Sciatic nerve (tissue), 2 donors: ENCODE measurements at regions of chr2 and their contacts with region 1.

Region 1: DNA sequence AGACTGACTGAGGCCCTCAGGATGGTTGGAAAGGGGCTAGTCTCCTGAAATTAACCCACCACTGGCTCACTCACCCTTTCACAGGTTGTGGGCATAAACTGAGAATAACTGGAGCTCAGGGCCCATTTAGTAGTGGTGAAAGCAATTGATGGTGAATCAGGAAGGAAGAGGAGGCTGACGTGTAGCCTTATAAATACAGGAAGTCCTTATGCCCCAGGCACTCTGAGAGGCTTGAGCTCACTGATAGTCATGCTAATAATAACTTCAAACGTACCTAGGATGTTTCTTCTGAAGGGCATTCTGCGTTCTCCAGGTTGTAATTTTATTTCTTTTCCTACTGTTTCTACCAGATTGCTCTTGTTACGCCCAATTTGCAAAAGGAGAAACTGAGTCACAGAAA is 328.4 kb downstream of the CLIP4 start:
- DNase-seq: no peak
- ATAC-seq: no peak

Region 2: DNA sequence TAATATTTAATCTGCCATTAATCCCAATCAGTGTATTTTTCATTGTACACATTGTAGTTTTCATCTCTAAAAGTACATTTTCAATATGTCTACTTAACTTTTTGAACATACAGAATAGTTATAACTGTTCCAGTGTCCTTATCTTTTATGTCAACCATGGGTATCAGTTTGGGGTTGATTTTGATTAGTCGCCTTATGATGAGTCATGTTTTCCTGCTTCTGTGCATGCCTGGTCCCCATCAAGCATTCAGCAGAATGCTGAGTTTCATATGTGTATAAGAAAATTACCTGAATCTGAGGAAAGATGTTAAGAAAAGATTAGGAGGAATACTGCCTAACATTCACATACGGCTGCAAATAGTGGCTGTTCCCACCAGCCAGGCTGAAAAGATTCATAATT is 615.2 kb before region 1 on chr2:
- intact Hi-C with region 1: loop called (anchors 5 kb)
- DNase-seq: no peak
- ATAC-seq: no peak

Region 3: GRCh38 chr2:29174937-29175336 is 268.7 kb before region 1 on chr2:
- intact Hi-C with region 1: no loop called
- DNase-seq: no peak
- ATAC-seq: no peak

Region 4: GRCh38 chr2:29398384-29399237 is 45.0 kb before region 1 on chr2:
- intact Hi-C with region 1: no loop called
- DNase-seq: no peak
- ATAC-seq: no peak